Activated CD4-positive, alpha-beta T cell treated with anti-CD3 and anti-CD28 coated beads for 36 hours (primary cell): ENCODE measurements at regions of chr17 and their contacts with region 1.

Region 1: DNA sequence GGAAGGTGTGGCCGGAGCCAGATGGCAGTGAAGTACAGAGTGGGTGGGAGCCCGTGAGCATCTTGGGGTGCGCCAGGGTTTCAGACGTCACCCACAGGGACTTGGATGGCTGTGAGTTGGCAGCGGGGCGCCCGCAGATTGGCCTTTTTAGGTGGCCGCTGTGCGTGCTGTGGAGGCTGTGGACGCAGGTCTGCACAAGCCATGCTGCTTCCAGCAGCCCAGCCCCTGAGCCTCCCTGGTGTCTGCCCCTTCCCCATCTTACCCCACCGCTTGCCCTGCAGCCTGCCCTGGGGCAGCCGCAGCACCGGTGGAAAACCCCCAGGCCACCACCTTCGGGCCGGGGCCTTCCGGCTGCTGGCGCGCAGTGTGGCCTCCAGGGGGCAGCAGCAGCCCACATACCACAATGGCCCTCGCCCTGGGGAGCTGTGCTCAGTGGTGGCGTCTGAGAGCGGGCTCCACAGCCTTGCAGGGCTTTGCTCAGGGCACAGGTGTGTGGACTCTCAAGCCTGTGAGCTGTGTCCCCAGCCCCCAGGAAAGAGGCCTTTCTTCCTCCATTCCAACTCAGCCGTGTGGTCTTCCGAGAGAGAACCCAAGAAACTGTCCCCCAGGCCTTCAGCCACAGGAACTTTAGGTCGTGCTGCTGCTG is 11.8 kb downstream of the ENDOV start:
- DNase-seq: peak; percentile 93
- ATAC-seq: peak; percentile 99
- H3K4me3 Mint-ChIP-seq: no peak overlapping the region
- H3K27ac Mint-ChIP-seq: no peak overlapping the region
- H3K4me1 Mint-ChIP-seq: peaks cover 9% of the 10 kb centered on the region
- H3K27me3 Mint-ChIP-seq: no peaks in the 10 kb centered on the region

Region 2: GRCh38 chr17:80414803-80415625 is 11.8 kb before region 1 on chr17 and contains the start of gene ENDOV:
- CTCF ChIA-PET with region 1: interaction called, 14 read pairs
- POLR2A ChIA-PET with region 1: no interaction called
- intact Hi-C with region 1: no loop called
- DNase-seq: peak; percentile 95
- ATAC-seq: peak; percentile 96
- H3K4me3 Mint-ChIP-seq: peak within 1 kb of the TSS; percentile 81
- H3K27ac Mint-ChIP-seq: peak within 1 kb of the TSS; percentile 8
- H3K4me1 Mint-ChIP-seq: peaks cover 23% of the 10 kb centered on the region
- H3K27me3 Mint-ChIP-seq: peaks cover 16% of the 10 kb centered on the region
- total RNA-seq, gene ENDOV: 12.3 to 13.0 TPM

Region 3: DNA sequence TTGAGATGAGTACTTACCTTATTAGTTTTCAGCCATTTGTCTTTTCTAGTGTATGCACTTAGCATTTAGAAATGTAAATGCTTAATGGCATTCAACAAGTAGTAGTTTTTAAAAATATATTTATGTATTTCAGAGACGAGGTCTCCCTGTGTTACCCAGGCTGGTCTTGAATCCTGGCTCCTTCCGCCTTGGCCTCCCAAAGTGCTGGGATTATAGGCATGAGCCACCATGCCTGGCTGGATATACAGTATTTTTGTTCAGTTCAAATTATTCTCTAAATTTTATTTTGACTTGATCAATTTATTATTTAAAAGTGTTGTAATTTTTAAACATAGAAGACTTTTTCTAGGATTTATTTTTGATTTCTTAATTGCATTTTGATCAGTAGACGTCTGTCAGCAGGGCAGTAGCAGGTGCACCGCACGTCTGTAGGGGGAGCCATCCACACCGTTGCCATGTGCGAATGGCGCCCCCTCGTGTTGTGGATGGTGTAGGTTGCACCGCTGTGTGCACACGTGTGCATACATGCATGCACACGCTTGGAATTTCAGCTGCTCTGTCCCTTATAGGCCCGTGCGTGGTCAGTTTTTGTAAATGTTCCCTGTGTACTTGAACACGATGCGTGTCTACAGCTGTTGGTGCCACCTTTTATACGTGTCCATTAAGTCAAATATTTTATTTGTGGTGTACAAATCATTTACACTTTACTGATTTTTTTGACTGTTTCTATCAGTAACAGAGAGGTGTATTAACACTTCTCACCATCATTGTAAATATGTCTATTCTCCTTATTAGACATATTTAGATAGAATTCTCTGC is 148.5 kb after region 1 on chr17:
- CTCF ChIA-PET with region 1: interaction called, 11 read pairs
- POLR2A ChIA-PET with region 1: no interaction called
- intact Hi-C with region 1: loop called (anchors 1 kb)
- DNase-seq: peak; percentile 97
- ATAC-seq: peak; percentile 100
- H3K4me3 Mint-ChIP-seq: no peak overlapping the region
- H3K27ac Mint-ChIP-seq: no peak overlapping the region
- H3K4me1 Mint-ChIP-seq: peaks cover 9% of the 10 kb centered on the region
- H3K27me3 Mint-ChIP-seq: no peaks in the 10 kb centered on the region

Region 4: DNA sequence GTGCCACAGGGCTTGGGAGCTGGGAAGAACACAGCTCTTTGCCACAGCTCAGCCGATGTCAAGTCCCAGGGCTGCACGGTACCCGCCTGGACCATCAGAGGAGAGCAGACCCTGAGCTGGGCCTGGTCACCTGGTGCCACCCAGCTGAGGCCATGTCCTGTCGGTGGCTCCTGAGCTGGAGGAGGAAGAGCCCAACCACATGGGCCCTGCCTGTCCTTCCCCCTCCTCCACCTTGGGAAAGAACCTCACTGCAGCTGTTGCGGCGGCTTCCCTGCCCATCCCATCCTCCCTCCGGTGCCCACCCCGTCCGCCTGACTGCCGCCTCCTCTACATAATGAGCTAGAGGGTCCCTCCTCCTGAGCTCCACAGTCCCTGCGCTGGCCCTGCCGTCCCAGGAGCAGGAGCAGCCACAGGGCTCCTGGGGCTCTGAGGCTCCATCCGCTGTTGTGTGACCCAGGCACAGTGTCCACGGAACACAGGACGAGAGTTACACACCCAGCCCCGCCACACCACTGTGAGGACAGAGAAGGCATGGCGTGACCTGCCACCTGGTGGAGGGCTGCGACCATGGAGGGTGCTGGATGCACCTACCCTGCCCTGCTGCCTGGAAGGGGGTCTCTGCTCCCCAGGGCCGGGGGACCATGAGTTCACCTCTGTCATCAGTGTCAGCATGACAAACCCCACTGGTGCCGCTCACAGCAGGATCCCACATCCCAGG is 543.4 kb after region 1 on chr17:
- CTCF ChIA-PET with region 1: interaction called, 5 read pairs
- POLR2A ChIA-PET with region 1: no interaction called
- intact Hi-C with region 1: loop called in 1 of 2 experiments (anchors 1 kb)
- DNase-seq: peak; percentile 76
- ATAC-seq: peak; percentile 73
- H3K4me3 Mint-ChIP-seq: no peak overlapping the region
- H3K27ac Mint-ChIP-seq: no peak overlapping the region
- H3K4me1 Mint-ChIP-seq: peaks cover 5% of the 10 kb centered on the region
- H3K27me3 Mint-ChIP-seq: peaks cover 4% of the 10 kb centered on the region

Region 5: DNA sequence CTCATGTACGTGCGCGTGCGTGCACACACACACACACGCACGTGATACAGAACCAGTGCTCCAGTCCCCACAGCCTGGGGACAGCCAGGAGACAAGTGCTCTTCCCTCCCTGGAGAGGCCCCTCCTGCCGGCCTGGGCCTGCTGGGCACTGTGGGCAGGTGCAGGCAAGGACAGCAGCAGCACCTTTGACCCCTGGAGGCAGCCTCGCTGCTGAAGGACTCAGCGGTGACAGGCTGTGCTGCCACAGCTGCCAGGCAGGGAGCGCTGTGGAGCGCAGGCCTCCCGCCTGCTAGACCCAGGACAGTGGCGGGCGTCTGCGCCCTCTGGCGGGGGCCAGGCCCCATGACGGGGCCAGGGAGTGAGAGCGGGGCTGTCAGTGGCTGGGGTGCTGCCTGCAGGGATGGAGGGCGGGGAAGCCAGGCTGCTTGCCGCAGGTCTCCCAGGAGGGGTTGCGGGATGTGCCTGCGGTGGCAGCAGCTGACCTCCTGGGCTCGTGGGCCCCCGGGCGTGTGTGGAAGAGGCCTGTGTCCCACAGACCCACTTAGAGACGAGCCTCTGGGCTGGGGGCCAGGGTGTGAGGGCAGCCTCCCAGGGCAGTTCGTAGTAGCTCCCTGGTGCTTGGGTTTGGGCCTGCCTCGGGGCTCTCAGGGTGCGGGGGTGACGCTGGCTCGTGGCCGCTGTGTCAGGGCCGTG is 675.0 kb after region 1 on chr17:
- CTCF ChIA-PET with region 1: interaction called, 4 read pairs
- POLR2A ChIA-PET with region 1: no interaction called
- intact Hi-C with region 1: loop called in 1 of 2 experiments (anchors 2 kb)
- DNase-seq: peak; percentile 94
- ATAC-seq: peak; percentile 97
- H3K4me3 Mint-ChIP-seq: no peak overlapping the region
- H3K27ac Mint-ChIP-seq: no peak overlapping the region
- H3K4me1 Mint-ChIP-seq: peaks cover 14% of the 10 kb centered on the region
- H3K27me3 Mint-ChIP-seq: no peaks in the 10 kb centered on the region